Activated T-helper 2 cell treated with anti-CD3 and anti-CD28 coated beads, Interferon-gamma antibody, Interleukin-2, Interleukin-4, amounts not matched to agents 10 μg/mL and 5 μg/mL and 100 μg/mL, durations not matched to agents 14 hours and 24 hours and 36 hours (primary cell): ENCODE measurements at regions of chr12 and their contacts with region 1.

Region 1: GRCh38 chr12:107328442-107329133 is 235.2 kb upstream of the CRY1 start:
- DNase-seq: no peak
- H3K4me3 Mint-ChIP-seq: no peak overlapping the region
- H3K27ac Mint-ChIP-seq: no peak overlapping the region
- H3K4me1 Mint-ChIP-seq: peaks cover 87% of the 10 kb centered on the region
- H3K27me3 Mint-ChIP-seq: no peaks in the 10 kb centered on the region

Region 2: GRCh38 chr12:106955377-106956047 is 373.1 kb before region 1 on chr12 and contains the start of gene TMEM263:
- intact Hi-C with region 1: no loop called
- DNase-seq: peak; percentile 89
- H3K4me3 Mint-ChIP-seq: peak within 1 kb of the TSS; percentile 93
- H3K27ac Mint-ChIP-seq: peak within 1 kb of the TSS; percentile 93
- H3K4me1 Mint-ChIP-seq: peaks cover 23% of the 10 kb centered on the region
- H3K27me3 Mint-ChIP-seq: peaks cover 4% of the 10 kb centered on the region
- total RNA-seq, gene TMEM263: 30.6 and 31.8 TPM in 2 replicates

Region 3: GRCh38 chr12:107356266-107356936 is 27.8 kb after region 1 on chr12:
- intact Hi-C with region 1: loop called (anchors 2 kb)
- DNase-seq: no peak
- H3K4me3 Mint-ChIP-seq: no peak overlapping the region
- H3K27ac Mint-ChIP-seq: no peak overlapping the region
- H3K4me1 Mint-ChIP-seq: peaks cover 64% of the 10 kb centered on the region
- H3K27me3 Mint-ChIP-seq: no peaks in the 10 kb centered on the region